Activated naive CD4-positive, alpha-beta T cell treated with anti-CD3 and anti-CD28 coated beads for 36 hours (primary cell): ENCODE measurements at regions of chr16 and their contacts with region 1.

Region 1: DNA sequence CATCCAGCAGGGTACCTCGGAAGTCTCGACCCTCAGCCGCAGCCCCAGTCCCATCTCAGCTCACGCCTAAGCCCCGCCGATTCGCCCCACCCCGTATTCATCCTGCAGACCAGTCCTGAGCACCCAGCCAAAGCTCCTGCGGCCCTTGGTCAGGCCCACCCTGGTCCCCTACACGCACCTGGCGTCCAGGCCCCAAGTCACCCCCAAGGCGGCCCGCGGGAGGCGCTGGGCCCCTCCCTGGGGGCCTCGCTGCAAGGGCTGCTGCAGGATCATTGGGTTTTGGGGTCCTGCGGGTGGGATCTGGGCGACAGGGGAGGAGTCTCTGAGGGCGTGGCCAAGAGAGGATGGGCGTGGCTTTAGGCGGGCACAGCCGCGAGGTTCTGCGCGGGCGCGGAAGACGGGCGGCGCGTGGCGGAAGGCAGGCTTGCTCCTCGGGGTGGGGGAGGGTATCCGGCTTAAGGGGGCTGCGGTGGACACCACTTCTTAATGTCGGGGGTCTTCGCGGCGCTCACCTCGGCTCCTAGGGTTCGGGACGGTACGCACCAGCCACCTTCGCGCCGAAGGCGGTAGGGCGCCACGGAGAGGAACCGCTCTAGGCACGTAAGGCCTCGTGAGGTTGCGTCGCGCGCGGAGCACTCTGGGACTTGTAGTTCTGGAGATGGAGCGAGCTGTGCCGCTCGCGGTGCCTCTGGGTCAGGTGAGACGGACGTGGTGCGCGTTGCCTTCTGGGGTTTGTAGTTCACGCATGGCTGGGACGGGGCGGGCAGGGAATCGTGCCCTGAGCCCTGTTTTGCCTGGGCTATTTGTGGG is at the starts of genes HCFC1R1 and THOC6:
- DNase-seq: peak; percentile 98
- H3K4me3 Mint-ChIP-seq: peak within 1 kb of the TSS; percentile 95
- H3K27ac Mint-ChIP-seq: peak within 1 kb of the TSS; percentile 98
- H3K4me1 Mint-ChIP-seq: peaks cover 50% of the 10 kb centered on the region
- H3K27me3 Mint-ChIP-seq: peaks cover 6% of the 10 kb centered on the region
- total RNA-seq, gene HCFC1R1: 22.6 to 26.8 TPM
- total RNA-seq, gene THOC6: 40.6 to 41.0 TPM

Region 2: GRCh38 chr16:2047330-2048115 is 976.4 kb before region 1 on chr16 and contains the starts of genes NTHL1 and TSC2:
- CTCF ChIA-PET with region 1: no interaction called
- intact Hi-C with region 1: loop called (anchors 5 kb)
- DNase-seq: peak; percentile 95
- H3K4me3 Mint-ChIP-seq: peak within 1 kb of the TSS; percentile 93
- H3K27ac Mint-ChIP-seq: peak within 1 kb of the TSS; percentile 61
- H3K4me1 Mint-ChIP-seq: peaks cover 16% of the 10 kb centered on the region
- H3K27me3 Mint-ChIP-seq: no peaks in the 10 kb centered on the region
- total RNA-seq, gene NTHL1: 20.1 to 24.1 TPM
- total RNA-seq, gene TSC2: 72.3 to 72.7 TPM

Region 3: DNA sequence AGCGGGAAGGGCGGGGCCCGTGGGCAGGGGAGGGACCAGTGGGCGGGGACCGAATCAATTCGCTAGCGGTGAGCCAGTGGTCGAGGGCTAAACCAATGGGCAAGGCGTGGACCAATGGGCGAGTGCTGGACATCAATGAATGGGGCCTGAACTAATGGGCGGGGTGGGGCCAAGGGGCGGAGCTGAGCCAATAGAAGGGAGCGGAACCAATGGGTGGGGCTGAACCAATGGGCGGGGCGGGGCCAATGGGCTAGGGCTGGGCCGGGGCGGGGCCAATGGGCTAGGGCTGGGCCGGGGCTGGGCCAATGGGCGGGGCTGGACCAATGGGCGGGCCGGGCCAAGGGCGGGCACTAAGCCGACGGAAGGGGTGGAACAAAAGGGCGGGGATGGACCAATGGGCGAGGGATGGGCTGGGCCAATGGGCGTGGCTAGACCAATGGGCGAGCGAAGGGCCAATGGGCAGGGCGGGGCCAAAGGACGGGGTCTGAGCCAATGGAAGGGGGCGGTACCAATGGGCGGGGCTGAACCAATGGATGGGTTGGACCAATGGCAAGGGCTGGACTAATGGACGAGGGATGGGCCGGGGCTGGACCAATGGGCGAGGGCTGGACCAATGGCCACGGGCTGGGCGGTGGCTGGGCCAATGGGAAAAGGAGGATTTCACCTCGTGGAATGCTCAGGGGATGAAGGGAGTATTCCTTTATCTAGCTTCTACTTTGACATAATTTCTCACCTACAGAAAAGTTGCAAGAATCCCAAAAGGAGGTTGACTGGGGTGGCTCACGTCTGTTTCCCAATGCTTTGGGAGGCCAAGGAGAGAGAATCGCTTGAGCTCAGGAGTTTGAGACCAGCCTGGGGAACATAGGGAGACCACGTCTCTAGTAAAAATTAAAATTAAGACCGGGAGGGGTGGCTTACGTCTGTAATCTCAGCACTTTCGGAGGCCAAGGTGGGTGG is 118.2 kb before region 1 on chr16:
- CTCF ChIA-PET with region 1: no interaction called
- intact Hi-C with region 1: loop called (anchors 1 kb)
- DNase-seq: peak; percentile 99
- H3K4me3 Mint-ChIP-seq: peak overlapping the region; percentile 90
- H3K27ac Mint-ChIP-seq: no peak overlapping the region
- H3K4me1 Mint-ChIP-seq: peaks cover 18% of the 10 kb centered on the region
- H3K27me3 Mint-ChIP-seq: no peaks in the 10 kb centered on the region

Region 4: GRCh38 chr16:2980227-2981086 is 43.4 kb before region 1 on chr16 and contains the start of gene PKMYT1:
- CTCF ChIA-PET with region 1: interaction called, 4 read pairs
- intact Hi-C with region 1: loop called (anchors 2 kb)
- DNase-seq: peak; percentile 95
- H3K4me3 Mint-ChIP-seq: peak within 1 kb of the TSS; percentile 81
- H3K27ac Mint-ChIP-seq: peak within 1 kb of the TSS; percentile 84
- H3K4me1 Mint-ChIP-seq: peaks cover 14% of the 10 kb centered on the region
- H3K27me3 Mint-ChIP-seq: no peaks in the 10 kb centered on the region
- total RNA-seq, gene PKMYT1: 128 to 136 TPM

Region 5: DNA sequence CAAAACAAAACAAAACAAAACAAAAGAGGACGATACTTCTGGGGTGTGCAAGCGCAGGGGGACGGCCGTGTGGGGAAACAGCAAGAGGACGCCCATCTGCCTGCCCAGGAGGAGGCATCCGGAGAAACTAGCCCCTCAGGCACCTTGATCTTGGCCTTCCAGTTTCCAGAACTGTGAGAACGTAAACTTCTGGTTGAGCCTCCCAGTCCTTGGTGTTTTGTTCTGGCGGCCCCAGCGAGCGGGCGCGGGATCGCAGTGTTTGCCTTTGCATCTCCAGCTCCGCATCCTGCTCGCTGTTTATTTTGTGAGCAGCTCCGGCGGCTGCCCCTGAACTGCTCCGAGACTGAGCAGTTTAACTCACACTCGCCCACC is 21.5 kb after region 1 on chr16:
- CTCF ChIA-PET with region 1: interaction called, 98 read pairs
- intact Hi-C with region 1: no loop called
- DNase-seq: peak; percentile 57
- H3K4me3 Mint-ChIP-seq: peak overlapping the region; percentile 66
- H3K27ac Mint-ChIP-seq: no peak overlapping the region
- H3K4me1 Mint-ChIP-seq: peaks cover 15% of the 10 kb centered on the region
- H3K27me3 Mint-ChIP-seq: peaks cover 36% of the 10 kb centered on the region

Region 6: DNA sequence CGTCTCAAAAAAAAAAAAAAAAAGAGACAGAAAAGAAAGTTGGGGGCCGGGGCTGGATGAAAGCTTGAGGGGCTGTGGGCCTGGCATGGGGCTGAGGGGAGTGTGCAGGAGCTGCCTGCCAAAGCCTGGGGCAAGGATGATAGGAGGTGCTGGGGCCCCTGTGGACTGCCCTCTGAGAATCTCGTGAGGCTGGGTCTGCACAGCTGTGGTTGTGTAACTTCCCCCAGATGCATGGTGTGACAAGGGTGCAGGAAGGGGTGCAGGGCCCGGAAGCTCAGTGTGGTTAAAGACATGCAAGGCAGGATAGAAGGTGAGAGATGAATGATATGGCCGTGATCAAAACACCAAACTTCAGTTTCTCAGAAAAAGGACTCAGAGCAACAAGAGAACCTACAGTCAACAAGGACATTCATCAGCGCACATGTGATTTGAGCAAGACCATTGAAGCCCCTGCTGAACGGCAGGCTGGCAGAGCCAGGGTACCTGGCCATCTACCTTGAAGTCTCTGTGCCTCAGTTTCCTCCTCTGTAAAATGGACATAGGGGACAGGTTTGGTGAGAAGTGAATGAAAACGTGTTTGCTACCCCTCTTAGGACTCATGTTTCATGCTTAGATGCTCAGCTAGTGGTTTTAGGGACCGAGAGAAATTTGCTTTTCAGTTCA is 51.1 kb after region 1 on chr16:
- CTCF ChIA-PET with region 1: interaction called, 3 read pairs
- intact Hi-C with region 1: loop called (anchors 1 kb)
- DNase-seq: peak; percentile 94
- H3K4me3 Mint-ChIP-seq: peak overlapping the region; percentile 71
- H3K27ac Mint-ChIP-seq: peak overlapping the region; percentile 98
- H3K4me1 Mint-ChIP-seq: peaks cover 77% of the 10 kb centered on the region
- H3K27me3 Mint-ChIP-seq: no peaks in the 10 kb centered on the region

Region 7: GRCh38 chr16:3264137-3265036 is 240.5 kb after region 1 on chr16:
- CTCF ChIA-PET with region 1: no interaction called
- intact Hi-C with region 1: loop called (anchors 5 kb)
- DNase-seq: peak; percentile 98
- H3K4me3 Mint-ChIP-seq: peak overlapping the region; percentile 85
- H3K27ac Mint-ChIP-seq: peak overlapping the region; percentile 88
- H3K4me1 Mint-ChIP-seq: peaks cover 30% of the 10 kb centered on the region
- H3K27me3 Mint-ChIP-seq: no peaks in the 10 kb centered on the region